ENCODE measurements at regions of chrX and their contacts with region 1.

Region 1: DNA sequence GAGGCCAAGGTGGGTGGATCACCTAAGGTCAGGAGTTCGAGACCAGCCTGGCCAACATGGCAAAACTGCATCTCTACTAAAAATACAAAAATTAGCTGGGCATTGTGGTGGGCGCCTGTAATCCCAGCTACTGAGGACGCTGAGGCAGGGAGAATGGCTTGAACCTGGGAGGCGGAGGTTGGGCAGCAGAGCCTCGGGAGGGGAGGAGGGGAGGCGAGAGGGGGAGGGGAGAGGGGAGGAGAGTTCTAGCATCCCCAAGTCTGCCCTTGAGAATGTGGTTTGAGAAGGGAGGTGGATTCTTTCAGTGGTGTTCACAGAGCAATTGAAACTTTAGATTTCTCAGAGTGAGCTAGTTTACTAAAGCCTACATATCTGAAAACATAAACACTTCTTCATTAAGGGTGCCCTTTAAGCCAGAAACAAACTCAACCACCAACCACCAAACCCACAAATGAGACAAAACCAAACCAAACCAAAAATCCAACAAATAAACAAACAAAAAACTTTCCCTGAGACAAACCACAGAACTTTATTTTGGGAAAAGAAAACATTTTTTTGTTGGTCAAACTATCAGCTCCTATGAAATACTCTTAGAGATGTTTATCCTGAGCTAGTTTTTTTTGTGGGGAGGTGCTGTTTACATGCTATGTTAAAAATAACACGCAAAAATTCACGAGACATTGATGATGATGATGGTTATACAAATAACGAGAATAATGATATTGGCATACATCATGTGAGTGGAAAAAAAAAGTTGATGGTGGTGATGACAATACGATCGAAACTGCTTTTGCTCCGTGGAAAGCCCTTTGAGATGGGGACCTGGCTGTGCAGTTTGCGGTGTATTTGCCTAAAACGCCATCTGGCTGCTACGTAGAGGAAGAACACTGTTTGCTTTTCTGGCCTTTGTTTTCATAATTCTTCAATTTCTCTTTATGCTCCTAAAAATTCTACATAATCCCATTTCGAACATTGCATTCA is 98.2 kb upstream of the PRKX start:
- DNase-seq: peak; percentile 57
- H3K4me3 Mint-ChIP-seq: no peak overlapping the region
- H3K27ac Mint-ChIP-seq: peak overlapping the region; percentile 23
- H3K4me1 Mint-ChIP-seq: peaks cover 8% of the 10 kb centered on the region
- H3K27me3 Mint-ChIP-seq: peaks cover 7% of the 10 kb centered on the region

Region 2: GRCh38 chrX:3493605-3494004 is 318.0 kb before region 1 on chrX:
- CTCF ChIA-PET with region 1: no interaction called
- POLR2A ChIA-PET with region 1: no interaction called
- intact Hi-C with region 1: no loop called
- DNase-seq: no peak
- H3K4me3 Mint-ChIP-seq: no peak overlapping the region
- H3K27ac Mint-ChIP-seq: no peak overlapping the region
- H3K4me1 Mint-ChIP-seq: no peaks in the 10 kb centered on the region
- H3K27me3 Mint-ChIP-seq: peaks cover 2% of the 10 kb centered on the region

Region 3: GRCh38 chrX:3651276-3651675 is 160.3 kb before region 1 on chrX:
- CTCF ChIA-PET with region 1: interaction called, 17 read pairs
- POLR2A ChIA-PET with region 1: no interaction called
- intact Hi-C with region 1: loop called (anchors 1 kb)
- DNase-seq: no peak
- H3K4me3 Mint-ChIP-seq: no peak overlapping the region
- H3K27ac Mint-ChIP-seq: peak overlapping the region; percentile 39
- H3K4me1 Mint-ChIP-seq: peaks cover 6% of the 10 kb centered on the region
- H3K27me3 Mint-ChIP-seq: no peaks in the 10 kb centered on the region

Region 4: DNA sequence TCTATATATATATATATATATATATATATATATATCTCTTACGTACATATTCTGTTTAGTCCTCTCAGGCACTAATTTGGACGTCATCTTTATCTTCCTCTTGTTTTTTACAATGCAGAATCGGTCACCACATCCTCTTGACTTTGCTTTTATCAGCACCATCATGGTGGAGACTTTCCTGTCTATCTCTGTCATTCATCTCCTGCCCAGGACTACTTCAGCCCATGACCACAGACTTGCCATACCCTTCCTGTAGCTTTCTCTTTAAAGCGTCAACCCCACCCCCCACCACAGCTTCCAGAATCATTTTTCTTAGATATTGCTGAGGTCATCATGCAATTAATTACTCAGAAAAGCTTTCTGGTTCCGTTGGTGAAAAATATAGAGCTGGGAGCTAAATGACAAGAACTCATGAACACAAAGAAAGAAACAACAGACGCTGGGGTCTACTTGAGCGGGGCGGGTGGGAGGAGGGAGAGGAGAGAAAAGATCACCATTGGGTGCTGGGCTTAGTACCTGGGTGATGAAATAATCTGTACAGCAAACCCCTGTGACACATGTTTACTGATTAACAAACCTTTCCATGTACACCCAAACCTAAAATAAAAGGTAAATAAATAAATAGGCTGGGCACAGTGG is 67.7 kb before region 1 on chrX:
- CTCF ChIA-PET with region 1: no interaction called
- POLR2A ChIA-PET with region 1: no interaction called
- intact Hi-C with region 1: loop called (anchors 2 kb)
- DNase-seq: peak; percentile 73
- H3K4me3 Mint-ChIP-seq: peak overlapping the region; percentile 53
- H3K27ac Mint-ChIP-seq: peak overlapping the region; percentile 86
- H3K4me1 Mint-ChIP-seq: peaks cover 42% of the 10 kb centered on the region
- H3K27me3 Mint-ChIP-seq: no peaks in the 10 kb centered on the region

Measured in activated CD4-positive, alpha-beta memory T cell treated with anti-CD3 and anti-CD28 coated beads for 36 hours (primary cell).